Dendritic cell treated with granulocyte-macrophage colony-stimulating factor and Interleukin-4, amounts not matched to agents 40 ng/mL and 50 ng/mL, for 4 days (primary cell): ENCODE measurements at regions of chr1 and their contacts with region 1.

Region 1: DNA sequence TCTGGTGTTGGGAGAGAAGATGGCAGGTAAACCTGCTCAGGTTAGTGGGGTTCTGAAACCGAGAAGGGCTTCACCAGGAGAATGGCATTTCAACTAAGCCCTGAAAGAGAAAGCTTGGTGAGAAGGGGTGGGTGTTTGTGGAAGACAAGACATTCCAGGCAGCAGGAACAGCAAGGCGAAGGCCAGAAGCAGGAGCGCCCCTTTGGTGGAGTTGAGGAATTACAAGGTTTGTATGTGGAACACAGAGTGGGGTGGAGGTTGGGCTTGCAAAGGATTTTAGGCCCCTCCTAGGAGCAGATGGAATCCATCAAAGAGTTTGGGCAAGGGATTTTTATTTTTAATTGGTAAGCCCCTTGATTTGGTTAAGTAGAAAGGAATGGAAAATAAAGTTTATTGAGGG is 24.8 kb upstream of the ELOA start:
- H3K4me3 Mint-ChIP-seq: no peak overlapping the region
- H3K27ac Mint-ChIP-seq: no peak overlapping the region
- H3K4me1 Mint-ChIP-seq: peaks cover 15% of the 10 kb centered on the region
- H3K27me3 Mint-ChIP-seq: no peaks in the 10 kb centered on the region

Region 2: GRCh38 chr1:23751050-23751814 is 32.8 kb after region 1 on chr1:
- intact Hi-C with region 1: loop called (anchors 5 kb)
- H3K4me3 Mint-ChIP-seq: no peak overlapping the region
- H3K27ac Mint-ChIP-seq: peak overlapping the region; percentile 18
- H3K4me1 Mint-ChIP-seq: peaks cover 25% of the 10 kb centered on the region
- H3K27me3 Mint-ChIP-seq: no peaks in the 10 kb centered on the region